Activated B cell treated with CpG ODN at 0.5 μM for 24 hours (primary cell): ENCODE measurements at regions of chr1 and their contacts with region 1.

Region 1: GRCh38 chr1:150168960-150169601 is 19.4 kb downstream of the PLEKHO1 start:
- DNase-seq: peak; percentile 45
- ATAC-seq: peak; percentile 64
- H3K4me3 Mint-ChIP-seq: no peak overlapping the region
- H3K27ac Mint-ChIP-seq: no peak overlapping the region
- H3K4me1 Mint-ChIP-seq: peaks cover 34% of the 10 kb centered on the region
- H3K27me3 Mint-ChIP-seq: no peaks in the 10 kb centered on the region
- CTCF ChIP-seq: no peak

Region 2: DNA sequence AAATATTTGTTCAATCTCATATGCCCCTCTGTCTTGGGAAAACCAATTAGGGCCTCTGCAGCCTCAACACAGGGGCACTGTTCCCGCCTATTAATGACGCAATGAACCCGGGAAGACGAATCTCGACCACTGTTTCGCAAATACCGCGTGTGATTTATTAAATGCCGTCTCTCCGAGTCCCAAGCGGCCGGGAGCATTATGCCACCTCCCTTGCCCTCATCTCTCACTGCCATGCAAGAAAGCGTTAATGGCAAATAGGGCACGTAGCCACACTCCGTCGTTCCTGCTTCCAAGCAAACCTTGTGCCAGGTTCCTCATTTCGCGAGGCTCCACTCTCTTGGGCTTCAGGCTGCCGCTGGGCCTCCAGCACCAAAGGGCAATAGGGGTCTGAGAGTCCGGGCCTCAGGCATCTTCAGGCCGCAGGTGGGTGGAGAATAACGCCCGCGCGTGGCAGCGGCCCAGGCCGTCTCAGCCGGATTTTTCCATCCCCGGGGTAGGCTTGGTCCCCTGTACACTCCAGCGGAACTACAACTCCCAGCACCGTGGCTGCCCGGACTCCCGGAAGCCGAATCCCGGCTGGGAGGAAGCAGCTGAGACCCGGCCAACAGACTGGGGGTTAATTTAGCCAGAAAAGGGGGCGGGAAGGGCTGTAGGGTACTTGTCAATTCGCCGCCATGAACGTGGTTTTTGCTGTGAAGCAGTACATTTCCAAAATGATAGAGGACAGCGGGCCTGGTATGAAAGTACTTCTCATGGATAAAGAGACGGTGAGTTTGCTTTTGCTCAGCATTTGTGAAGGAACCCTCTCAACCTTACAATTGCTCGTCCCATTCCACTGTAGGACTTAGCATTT is 101.7 kb before region 1 on chr1 and contains the start of gene VPS45:
- CTCF ChIA-PET with region 1: interaction called, 166 read pairs
- POLR2A ChIA-PET with region 1: interaction called, 38 read pairs
- intact Hi-C with region 1: no loop called
- DNase-seq: peak; percentile 71
- ATAC-seq: peak; percentile 86
- H3K4me3 Mint-ChIP-seq: peak within 1 kb of the TSS; percentile 95
- H3K27ac Mint-ChIP-seq: peak within 1 kb of the TSS; percentile 95
- H3K4me1 Mint-ChIP-seq: peaks cover 31% of the 10 kb centered on the region
- H3K27me3 Mint-ChIP-seq: no peaks in the 10 kb centered on the region
- CTCF ChIP-seq: no peak
- total RNA-seq, gene VPS45: 39.0 and 46.0 TPM in 2 replicates

Region 3: DNA sequence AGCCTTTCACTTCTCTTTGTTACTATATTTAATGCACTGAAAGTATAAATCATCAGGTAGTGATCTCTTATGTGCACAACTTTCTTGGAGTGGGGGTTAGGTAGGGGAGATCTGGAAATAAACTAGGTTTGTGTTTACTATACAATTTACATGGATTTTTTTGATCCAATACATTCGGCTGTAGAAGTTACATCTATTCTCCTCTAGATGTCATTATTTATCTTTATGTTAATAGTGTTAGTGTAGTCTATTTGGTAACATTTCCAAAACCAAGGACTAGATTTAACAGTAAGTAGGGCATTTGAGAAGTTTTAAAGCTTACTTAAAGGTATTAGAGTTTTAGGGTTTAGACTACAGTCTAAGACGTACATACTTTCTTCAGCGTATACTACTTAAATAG is 96.1 kb before region 1 on chr1:
- CTCF ChIA-PET with region 1: interaction called, 166 read pairs
- POLR2A ChIA-PET with region 1: interaction called, 38 read pairs
- intact Hi-C with region 1: loop called (anchors 1 kb)
- DNase-seq: no peak
- ATAC-seq: peak; percentile 69
- H3K4me3 Mint-ChIP-seq: no peak overlapping the region
- H3K27ac Mint-ChIP-seq: peak overlapping the region; percentile 5
- H3K4me1 Mint-ChIP-seq: peaks cover 39% of the 10 kb centered on the region
- H3K27me3 Mint-ChIP-seq: no peaks in the 10 kb centered on the region
- CTCF ChIP-seq: no peak

Region 4: DNA sequence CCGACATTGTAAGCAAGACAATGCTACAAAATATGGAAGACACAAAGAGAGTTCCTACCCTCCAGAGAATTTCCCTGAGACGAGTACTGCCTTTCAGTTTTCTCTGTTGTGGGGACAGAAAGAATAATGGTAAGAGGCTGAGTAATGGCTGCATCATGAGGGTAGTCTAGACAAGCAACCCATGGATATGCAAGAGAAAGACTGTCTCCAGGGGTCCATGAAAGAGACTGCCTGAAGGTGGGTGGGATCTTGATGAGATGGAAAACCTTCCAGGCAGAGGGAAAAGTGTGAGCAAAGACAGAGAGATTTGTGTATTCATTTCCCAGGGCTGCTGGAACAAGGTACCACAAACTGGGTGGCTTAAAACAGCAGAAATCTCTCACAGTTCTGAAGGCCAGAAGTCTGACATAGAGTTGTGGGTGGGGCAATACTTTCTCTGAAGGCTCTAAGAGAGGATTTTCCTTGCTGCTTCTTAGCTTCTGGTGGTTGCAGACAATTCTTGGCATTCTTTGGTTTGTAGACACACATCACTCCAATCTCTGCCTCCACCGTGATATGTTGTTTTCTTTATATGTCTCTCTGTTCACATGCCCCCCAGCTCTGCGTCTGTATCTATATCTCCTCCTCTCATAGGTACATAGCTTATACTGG is 25.4 kb after region 1 on chr1:
- CTCF ChIA-PET with region 1: no interaction called
- POLR2A ChIA-PET with region 1: no interaction called
- intact Hi-C with region 1: no loop called
- DNase-seq: no peak
- ATAC-seq: no peak
- H3K4me3 Mint-ChIP-seq: no peak overlapping the region
- H3K27ac Mint-ChIP-seq: no peak overlapping the region
- H3K4me1 Mint-ChIP-seq: no peaks in the 10 kb centered on the region
- H3K27me3 Mint-ChIP-seq: peaks cover 6% of the 10 kb centered on the region
- CTCF ChIP-seq: no peak